Activated T-helper 2 cell treated with anti-CD3 and anti-CD28 coated beads, Interferon-gamma antibody, Interleukin-2, Interleukin-4, amounts not matched to agents 10 μg/mL and 5 μg/mL and 100 μg/mL, durations not matched to agents 14 hours and 24 hours and 36 hours (primary cell): ENCODE measurements at regions of chr4 and their contacts with region 1.

Region 1: GRCh38 chr4:102449751-102450352 is 51.3 kb upstream of the NFKB1 start:
- DNase-seq: peak; percentile 42
- H3K4me3 Mint-ChIP-seq: no peak overlapping the region
- H3K27ac Mint-ChIP-seq: no peak overlapping the region
- H3K4me1 Mint-ChIP-seq: peaks cover 65% of the 10 kb centered on the region
- H3K27me3 Mint-ChIP-seq: no peaks in the 10 kb centered on the region

Region 2: DNA sequence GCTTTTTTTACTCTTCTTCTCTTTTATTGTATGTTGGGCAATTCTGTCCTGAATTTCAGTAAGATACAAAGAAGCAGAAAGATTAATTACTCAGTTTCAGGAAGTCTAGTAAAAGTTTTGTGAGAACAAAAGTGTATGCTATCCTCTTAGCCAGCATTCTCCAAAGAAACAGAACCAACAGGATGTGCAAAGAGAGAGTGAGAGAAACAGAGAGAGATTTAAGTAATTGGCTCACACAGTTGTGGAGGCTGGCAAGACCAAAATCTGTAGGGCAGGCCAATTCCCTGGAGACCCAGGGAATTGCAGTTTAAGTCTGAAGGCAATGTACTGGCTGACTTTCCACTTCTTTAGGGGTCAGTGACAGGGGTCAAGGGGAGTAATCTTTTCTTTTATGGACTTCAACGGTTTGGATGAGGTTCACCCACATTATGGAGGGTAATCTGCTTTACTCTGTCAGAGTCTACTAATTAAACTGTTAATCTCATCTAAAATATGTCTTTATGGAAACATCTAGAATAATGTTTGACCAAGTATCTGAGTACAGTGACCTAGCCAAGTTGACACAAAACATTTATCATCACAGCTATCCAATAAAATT is 45.3 kb before region 1 on chr4:
- intact Hi-C with region 1: no loop called
- DNase-seq: no peak
- H3K4me3 Mint-ChIP-seq: no peak overlapping the region
- H3K27ac Mint-ChIP-seq: no peak overlapping the region
- H3K4me1 Mint-ChIP-seq: peaks cover 9% of the 10 kb centered on the region
- H3K27me3 Mint-ChIP-seq: peaks cover 6% of the 10 kb centered on the region

Region 3: GRCh38 chr4:102500696-102501446 is 51.0 kb after region 1 on chr4 and contains the start of gene NFKB1:
- intact Hi-C with region 1: loop called (anchors 1 kb)
- DNase-seq: peak; percentile 74
- H3K4me3 Mint-ChIP-seq: peak within 1 kb of the TSS; percentile 96
- H3K27ac Mint-ChIP-seq: peak within 1 kb of the TSS; percentile 89
- H3K4me1 Mint-ChIP-seq: peaks cover 29% of the 10 kb centered on the region
- H3K27me3 Mint-ChIP-seq: no peaks in the 10 kb centered on the region
- total RNA-seq, gene NFKB1: 199 and 205 TPM in 2 replicates

Region 4: DNA sequence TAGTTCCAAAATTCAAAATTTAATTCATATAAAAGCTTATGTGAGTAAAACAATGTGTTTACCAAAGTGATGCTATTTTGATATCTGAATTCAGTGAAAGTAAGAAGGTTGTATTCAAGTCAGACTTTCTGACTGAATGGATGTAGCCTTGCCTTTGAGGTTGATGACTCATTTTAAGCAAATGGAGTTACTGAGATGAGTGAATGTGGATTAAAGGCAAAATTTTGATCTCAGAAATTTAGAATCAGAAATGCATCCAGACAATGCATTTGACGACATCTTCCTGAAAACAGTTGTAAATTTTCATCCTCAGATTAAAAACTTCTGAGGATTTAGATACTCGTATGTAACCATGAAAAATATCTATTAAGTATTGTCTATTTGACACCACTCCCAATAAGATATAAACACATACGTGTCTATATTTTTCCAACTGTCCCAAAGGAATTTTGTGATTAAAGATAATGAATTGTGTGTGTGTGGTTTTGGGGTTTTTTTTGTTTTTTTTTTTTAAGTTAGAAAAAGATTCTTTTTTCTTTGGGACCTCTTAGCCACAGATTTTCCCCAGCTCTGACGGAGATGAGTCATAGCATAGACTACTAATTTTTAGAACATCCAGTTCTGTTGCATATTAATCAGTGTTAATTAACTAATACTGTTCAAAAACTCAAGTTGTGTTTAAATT is 85.7 kb after region 1 on chr4:
- intact Hi-C with region 1: loop called (anchors 2 kb)
- DNase-seq: no peak
- H3K4me3 Mint-ChIP-seq: peak overlapping the region; percentile 5
- H3K27ac Mint-ChIP-seq: peak overlapping the region; percentile 55
- H3K4me1 Mint-ChIP-seq: peaks cover 54% of the 10 kb centered on the region
- H3K27me3 Mint-ChIP-seq: no peaks in the 10 kb centered on the region

Region 5: DNA sequence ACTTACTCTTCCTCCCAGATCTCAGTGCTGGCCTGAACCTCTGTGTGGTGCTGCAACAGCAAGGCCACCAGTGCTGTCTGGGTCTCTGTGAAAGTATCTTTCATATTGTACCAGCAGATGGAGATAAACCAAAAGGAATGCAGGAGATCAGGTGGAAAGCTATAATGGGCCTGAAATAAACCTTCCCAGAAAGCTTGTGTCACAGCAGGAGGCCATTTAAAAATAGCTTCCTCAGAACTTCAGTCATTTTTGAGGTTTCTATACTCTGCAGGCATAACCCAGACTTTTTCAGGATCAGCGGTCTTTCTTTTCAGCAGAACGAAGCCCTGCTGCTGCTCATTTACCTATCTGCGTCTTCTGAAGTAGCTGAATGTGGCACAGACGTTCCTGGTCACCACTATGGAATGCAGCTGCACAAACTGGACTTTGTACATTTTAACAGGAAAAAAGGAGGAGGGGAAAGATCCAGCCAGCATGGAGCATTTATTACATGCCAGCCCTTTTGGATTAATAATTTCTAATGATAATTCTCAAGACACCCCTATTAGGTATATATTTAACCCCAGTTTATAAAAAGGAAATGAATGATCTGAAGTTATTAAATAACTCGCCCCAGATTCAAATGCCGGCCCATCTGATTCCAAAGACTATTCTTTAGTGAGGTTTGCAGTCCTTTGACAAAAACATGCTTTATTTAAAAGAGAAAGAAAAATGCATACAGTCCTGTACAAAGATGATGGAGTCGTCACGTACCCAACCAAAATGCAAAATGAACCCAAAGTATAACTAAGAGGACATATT is 171.0 kb after region 1 on chr4:
- intact Hi-C with region 1: loop called (anchors 1 kb)
- DNase-seq: no peak
- H3K4me3 Mint-ChIP-seq: no peak overlapping the region
- H3K27ac Mint-ChIP-seq: peak overlapping the region; percentile 58
- H3K4me1 Mint-ChIP-seq: peaks cover 49% of the 10 kb centered on the region
- H3K27me3 Mint-ChIP-seq: no peaks in the 10 kb centered on the region

Region 6: DNA sequence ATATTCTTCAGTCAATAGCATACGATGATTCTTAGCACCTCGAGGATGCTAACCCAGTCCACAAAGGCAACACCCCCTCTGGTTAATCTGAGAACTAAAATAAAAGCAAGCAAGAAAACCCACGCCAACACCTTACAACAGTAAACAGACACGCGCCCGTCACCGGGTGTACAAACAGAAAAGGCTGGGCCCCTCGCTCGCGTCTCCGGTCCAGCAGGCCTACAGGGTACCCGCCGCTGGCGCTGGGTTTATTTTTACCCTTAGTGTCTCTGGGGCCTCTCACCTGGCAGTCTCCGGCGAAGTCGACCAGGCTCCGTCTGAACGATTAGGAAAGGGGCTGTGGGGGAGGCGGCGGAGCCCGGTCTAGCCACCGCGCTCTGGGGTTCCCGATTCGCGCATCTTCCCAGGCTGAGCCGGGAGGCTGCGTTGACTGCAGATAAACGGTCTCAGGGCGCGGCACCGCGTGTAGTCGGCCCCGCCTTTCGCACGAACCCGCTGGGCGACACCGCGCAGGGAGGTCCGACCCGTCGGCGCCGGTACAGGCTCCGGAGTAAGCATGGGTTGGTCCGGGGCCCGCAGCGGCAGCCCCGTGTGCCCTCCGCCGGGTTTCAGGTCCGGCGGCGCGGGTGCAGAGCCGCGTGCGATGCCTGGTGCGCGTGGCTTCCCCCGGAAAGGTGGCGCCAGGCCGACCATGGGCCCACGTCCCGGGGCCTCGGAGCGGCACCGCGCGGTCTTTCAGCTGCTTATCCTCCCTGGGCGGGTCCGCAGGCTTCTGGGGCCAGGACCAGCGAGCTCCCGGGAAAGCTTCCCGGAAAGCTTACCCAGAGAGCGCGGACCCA is 626.3 kb after region 1 on chr4:
- intact Hi-C with region 1: loop called (anchors 5 kb)
- DNase-seq: peak; percentile 66
- H3K4me3 Mint-ChIP-seq: peak overlapping the region; percentile 90
- H3K27ac Mint-ChIP-seq: peak overlapping the region; percentile 98
- H3K4me1 Mint-ChIP-seq: peaks cover 45% of the 10 kb centered on the region
- H3K27me3 Mint-ChIP-seq: no peaks in the 10 kb centered on the region